Right ventricle myocardium inferior (tissue), 1 donor: ENCODE measurements at regions of chr6 and their contacts with region 1.

Region 1: DNA sequence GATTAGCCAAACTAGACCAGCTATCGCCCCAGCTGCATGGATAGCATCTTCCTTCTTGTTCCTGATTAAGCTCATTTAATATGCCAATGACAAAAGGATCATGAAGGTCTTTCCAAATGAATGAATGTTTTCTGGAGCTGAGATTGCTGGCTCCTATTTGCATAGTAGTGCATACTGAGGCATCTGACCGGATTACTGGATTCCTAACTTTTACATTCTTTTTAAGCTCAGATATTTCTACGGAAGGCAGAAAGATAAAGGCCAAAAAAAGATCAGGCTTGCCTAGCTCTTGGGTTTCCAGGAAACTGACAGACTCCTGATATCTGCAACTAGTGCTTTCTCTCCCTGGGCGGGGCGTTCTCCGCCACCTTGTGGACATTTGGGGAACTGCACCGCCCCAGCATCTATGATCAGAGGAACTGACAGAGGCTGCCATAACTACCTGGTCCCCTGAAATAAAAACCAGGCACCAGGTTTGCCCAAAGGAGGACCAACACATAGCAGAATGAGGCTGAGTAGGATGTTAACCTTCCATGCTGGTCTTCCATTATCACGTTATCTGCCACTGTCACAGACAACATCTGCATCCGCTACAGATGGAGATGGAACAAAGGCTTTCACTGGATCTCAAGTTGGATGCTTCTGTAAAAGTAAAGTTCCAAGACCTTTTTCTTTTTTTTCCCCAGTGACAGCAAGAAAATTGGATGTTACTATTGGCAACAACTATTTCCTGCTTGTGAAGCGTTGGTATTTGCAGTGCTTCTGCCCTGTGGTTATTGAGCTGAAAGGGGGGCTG is 33.2 kb downstream of the NT5E start:
- DNase-seq: peak; percentile 90
- ATAC-seq: peak; percentile 90

Region 2: DNA sequence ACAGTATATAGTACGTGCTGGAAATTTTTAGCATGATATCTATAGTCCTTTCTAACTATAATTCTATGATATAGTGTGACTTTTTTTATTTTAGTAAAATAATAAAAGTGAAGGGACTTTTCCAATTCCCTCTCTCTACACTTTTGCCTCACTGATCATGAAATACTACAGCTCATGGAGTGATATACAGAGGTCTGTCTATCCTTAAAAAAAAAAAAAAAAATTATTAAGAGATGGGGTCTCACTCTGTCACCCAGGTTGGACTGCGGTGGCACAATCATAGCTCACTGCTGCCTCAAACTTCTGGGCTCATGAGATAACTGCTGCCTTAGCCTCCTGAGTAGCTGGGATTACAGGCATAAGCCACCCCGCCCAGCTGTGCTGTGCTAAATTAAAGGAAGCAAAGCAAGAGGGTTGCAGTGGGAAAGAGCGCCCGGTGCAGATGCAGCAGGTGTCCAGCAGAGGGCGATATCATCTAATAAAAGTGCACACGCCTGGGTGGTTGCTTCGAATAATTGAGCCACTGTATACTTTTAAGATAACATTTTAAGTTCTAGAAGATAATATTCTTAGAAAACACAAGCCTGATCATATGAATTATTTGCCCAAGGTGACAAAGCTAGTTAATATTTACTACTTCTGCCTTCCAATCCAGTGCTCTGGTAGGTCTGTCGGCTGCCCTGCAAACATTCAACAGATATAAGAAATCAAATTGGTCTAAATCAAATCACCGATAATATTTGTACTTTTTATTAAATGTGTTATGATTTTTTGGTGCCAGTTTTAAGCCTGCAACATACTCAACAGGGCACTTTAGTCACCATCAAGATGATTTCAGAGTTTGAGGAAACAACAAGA is 128.1 kb before region 1 on chr6:
- intact Hi-C with region 1: loop called (anchors 1 kb)
- DNase-seq: peak; percentile 79
- ATAC-seq: peak; percentile 83

Region 3: DNA sequence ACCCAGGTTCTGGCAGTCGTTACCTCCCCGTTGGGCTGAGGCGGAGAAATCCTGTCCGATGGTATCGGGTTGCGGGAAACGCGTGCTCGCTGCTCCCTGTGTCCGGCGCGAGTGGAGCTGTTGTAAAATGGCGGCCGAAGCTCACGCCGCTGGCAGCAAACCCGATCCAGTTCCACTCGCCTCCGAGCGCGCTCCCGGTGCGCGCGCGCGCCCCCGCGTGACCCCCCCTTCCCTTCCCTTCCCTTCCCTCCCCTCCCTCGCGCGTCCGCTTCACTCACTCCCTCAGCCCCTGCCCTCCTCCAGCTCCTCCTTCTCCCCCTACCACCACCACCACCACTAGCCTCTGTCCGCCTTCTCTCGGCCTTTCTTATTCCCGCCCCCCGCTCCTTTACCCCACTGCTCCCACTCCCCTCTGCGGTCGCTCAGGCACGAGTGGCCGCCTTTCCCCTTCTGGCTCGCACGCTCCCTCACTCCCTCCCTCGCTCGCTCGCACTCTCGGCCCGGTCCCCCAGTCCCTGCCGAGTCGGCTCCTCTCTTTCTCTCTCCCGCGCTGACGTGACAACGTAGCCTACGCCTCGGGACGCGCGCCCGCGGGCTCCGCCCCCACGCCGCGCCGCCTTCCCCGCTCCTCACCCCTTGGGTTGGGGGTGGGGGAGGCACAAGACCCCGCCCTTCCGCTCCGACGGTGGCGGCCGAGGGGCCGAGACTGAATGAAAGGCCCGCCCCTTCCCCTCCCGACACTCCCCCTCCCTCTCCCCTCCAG is 159.9 kb after region 1 on chr6 and contains the start of gene SYNCRIP:
- intact Hi-C with region 1: no loop called
- DNase-seq: peak; percentile 99
- ATAC-seq: peak; percentile 94
- total RNA-seq, gene SYNCRIP: 53.0 TPM